ENCODE measurements at regions of chr11 and their contacts with region 1.

Region 1: GRCh38 chr11:47248664-47249377 is at the start of gene ACP2:
- DNase-seq: peak; percentile 94
- H3K4me3 Mint-ChIP-seq: peak within 1 kb of the TSS; percentile 99
- H3K27ac Mint-ChIP-seq: peak within 1 kb of the TSS; percentile 97
- H3K4me1 Mint-ChIP-seq: peaks cover 24% of the 10 kb centered on the region
- H3K27me3 Mint-ChIP-seq: no peaks in the 10 kb centered on the region
- total RNA-seq, gene ACP2: 8.0 to 9.3 TPM

Region 2: GRCh38 chr11:46936138-46937110 is 312.4 kb before region 1 on chr11 and contains the start of gene CSTPP1:
- CTCF ChIA-PET with region 1: no interaction called
- intact Hi-C with region 1: loop called (anchors 1 kb)
- DNase-seq: peak; percentile 97
- H3K4me3 Mint-ChIP-seq: peak within 1 kb of the TSS; percentile 98
- H3K27ac Mint-ChIP-seq: peak within 1 kb of the TSS; percentile 88
- H3K4me1 Mint-ChIP-seq: peaks cover 18% of the 10 kb centered on the region
- H3K27me3 Mint-ChIP-seq: no peaks in the 10 kb centered on the region
- total RNA-seq, gene CSTPP1: 14.0 TPM

Region 3: DNA sequence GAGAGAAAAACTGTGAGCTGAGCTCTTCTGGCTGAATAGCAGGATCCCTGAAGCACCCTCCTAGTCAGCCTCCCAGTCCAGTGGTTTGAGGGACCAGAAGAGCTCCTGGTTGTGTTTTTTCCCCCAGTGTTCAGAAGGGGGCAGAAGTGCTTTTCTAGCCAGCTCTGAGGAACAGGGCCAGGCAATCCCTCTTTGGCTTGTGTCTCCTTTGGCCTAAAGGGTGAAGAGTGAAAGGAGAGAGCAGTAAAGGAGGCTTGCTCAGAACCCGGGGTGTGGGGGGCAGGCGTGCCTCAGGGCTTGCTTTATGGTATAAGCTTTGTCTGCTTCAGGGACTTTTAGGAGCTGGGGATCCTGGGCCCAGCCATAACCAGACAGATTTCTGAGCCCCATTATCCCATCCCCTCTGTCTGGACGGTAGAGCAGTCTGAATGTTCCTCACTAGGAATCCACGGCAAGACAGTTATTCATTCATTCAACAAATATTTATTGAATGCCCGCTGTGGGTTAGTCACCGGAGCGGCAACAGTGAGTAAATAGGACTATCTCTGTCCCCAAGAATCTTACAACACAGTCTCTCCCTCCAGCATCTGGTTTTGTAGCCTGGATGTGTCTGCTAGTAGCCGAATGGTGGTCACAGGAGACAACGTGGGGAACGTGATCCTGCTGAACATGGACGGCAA is 14.7 kb before region 1 on chr11:
- CTCF ChIA-PET with region 1: interaction called, 11 read pairs
- intact Hi-C with region 1: no loop called
- DNase-seq: peak; percentile 38
- H3K4me3 Mint-ChIP-seq: peak overlapping the region; percentile 3
- H3K27ac Mint-ChIP-seq: peak overlapping the region; percentile 77
- H3K4me1 Mint-ChIP-seq: peaks cover 30% of the 10 kb centered on the region
- H3K27me3 Mint-ChIP-seq: no peaks in the 10 kb centered on the region

Region 4: DNA sequence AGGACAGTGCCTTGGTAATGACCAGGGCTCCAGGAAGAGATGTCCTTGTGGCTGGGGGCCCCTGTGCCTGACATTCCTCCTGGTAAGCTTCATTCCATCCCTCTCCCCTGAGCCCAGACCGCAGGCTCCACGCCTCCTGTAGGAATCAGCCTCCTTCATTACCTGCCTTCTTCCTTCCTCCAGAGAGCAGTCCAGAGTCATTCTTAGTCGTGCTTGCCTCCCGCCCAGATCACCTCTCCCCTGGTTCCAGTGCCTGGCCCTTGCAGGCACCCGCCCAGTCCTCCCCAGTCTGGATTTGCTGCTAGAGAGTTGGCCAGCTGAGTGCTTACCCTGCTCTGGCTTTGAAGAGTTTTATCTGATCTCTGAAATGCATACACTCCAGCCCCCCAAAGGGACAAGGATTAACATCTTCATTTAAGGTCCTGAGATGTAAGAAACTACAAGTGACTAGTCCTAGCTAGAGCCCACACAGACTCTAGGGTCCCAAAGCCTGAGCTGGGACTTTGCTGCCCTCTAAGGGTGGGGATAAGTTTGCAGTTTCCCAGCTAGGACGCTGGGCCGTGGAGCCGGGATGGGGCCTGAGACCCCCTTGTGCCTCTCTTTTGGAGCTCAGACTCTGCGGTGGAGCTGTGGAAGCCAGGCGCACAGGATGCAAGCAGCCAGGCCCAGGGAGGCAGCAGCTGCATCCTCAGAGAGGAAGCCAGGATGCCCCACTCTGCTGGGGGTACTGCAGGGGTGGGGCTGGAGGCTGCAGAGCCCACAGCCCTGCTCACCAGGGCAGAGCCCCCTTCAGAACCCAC is 10.6 kb after region 1 on chr11:
- CTCF ChIA-PET with region 1: interaction called, 23 read pairs
- intact Hi-C with region 1: no loop called
- DNase-seq: peak; percentile 40
- H3K4me3 Mint-ChIP-seq: no peak overlapping the region
- H3K27ac Mint-ChIP-seq: no peak overlapping the region
- H3K4me1 Mint-ChIP-seq: peaks cover 8% of the 10 kb centered on the region
- H3K27me3 Mint-ChIP-seq: no peaks in the 10 kb centered on the region

Region 5: DNA sequence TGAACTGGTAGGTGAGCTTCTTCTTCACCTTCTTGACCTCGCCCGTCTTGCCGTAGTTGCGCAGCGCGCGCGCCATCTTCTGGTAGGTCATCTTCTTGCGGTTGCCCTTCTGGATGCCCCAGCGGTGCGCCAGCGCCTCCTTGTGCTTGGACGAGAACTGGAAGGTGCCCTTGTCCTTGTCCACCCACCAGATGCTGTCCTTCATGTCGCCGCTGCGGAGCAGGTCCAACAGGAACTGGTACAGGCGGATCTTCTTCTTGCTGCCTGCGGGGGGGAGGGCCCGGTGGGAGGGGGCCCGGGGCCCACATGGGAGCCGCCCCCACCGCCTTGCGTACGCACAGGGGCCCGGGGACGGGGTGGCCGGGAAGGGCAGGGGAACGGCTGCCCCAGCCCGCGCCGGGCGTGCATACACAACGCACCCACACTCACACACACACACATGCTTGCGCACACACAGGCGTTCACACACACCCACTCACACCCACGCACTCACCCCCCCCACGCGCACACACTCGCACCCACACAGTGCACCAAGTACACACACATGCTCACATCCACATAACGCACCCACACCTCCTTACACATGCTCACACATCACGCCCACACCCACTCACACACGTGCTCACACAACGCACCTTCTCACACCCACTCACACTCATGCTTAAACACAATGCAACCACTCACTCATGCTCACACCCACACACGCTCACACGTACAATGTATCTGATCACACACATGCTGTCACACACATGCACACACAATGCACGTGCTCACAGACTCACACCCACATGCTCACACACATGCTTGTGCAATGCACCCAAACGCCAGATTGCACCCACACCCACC is 106.7 kb after region 1 on chr11:
- CTCF ChIA-PET with region 1: no interaction called
- intact Hi-C with region 1: no loop called
- DNase-seq: peak; percentile 70
- H3K4me3 Mint-ChIP-seq: no peak overlapping the region
- H3K27ac Mint-ChIP-seq: no peak overlapping the region
- H3K4me1 Mint-ChIP-seq: peaks cover 12% of the 10 kb centered on the region
- H3K27me3 Mint-ChIP-seq: no peaks in the 10 kb centered on the region